CD4-positive, alpha-beta T cell (primary cell): ENCODE measurements at regions of chr11 and their contacts with region 1.

Region 1: DNA sequence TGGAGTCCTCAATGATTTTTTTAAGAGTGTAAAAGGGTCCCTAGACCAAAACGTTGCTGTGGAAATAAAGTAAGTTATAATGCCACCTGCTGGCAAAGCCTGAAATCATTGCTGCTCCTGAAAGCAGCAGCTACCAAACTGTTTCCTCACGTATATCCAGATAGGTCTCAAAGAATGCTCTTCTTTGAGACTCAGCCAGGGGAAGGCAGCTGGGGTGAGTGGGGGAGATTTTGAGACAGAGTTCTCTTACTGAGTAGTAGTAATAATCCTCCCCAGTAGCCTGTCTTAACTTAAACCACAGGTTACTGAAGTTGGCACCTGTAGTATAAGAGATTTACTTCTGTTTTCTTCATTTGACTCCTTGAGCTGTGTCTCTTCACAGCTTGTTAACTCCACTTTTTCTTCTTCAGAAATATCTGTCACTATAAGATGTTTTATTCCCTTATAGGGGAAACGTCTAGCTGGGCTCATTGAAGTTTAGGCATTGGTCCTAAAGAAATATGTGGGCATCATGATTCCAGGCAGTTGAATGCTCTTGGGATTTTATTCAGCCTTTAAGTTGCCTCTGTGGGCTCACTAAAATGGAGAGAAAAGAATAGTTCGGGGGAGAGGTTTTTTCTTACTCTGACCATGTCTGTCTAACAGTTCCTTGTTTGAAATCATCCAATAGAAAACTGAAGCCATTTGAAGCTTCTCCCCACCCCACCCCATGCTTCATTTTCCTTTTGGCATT is 77.9 kb downstream of the BTBD10 start:
- DNase-seq: peak in 6 of 14 experiments; percentile 7 to 47 (median 27)
- ATAC-seq: no peak
- H3K4me3 ChIP-seq: no peak overlapping the region
- H3K4me3 Mint-ChIP-seq: no peak overlapping the region
- H3K27ac ChIP-seq: no peak overlapping the region
- H3K27ac Mint-ChIP-seq: peak overlapping the region; percentile 19
- H3K4me1 ChIP-seq: no peaks in the 10 kb centered on the region
- H3K4me1 Mint-ChIP-seq: no peaks in the 10 kb centered on the region
- H3K27me3 ChIP-seq: no peaks in the 10 kb centered on the region
- H3K27me3 Mint-ChIP-seq: no peaks in the 10 kb centered on the region
- CTCF ChIP-seq: peak; percentile 74

Region 2: GRCh38 chr11:12963792-12964536 is 421.1 kb before region 1 on chr11:
- CTCF ChIA-PET with region 1: no interaction called
- POLR2A ChIA-PET with region 1: no interaction called
- intact Hi-C with region 1: loop called in 1 of 2 experiments (anchors 1 kb)
- DNase-seq: peak; percentile 20 to 70 (median 46)
- ATAC-seq: peak; percentile 65
- H3K4me3 ChIP-seq: no peak overlapping the region
- H3K4me3 Mint-ChIP-seq: no peak overlapping the region
- H3K27ac ChIP-seq: no peak overlapping the region
- H3K27ac Mint-ChIP-seq: no peak overlapping the region
- H3K4me1 ChIP-seq: no peaks in the 10 kb centered on the region
- H3K4me1 Mint-ChIP-seq: no peaks in the 10 kb centered on the region
- H3K27me3 ChIP-seq: peaks cover 5 to 11% of the 10 kb centered on the region in 2 experiments
- H3K27me3 Mint-ChIP-seq: peaks cover 47% of the 10 kb centered on the region
- CTCF ChIP-seq: peak; percentile 67

Region 3: GRCh38 chr11:13415203-13415602 is 30.1 kb after region 1 on chr11:
- CTCF ChIA-PET with region 1: no interaction called
- POLR2A ChIA-PET with region 1: no interaction called
- intact Hi-C with region 1: no loop called
- DNase-seq: no peak
- ATAC-seq: no peak
- H3K4me3 ChIP-seq: no peak overlapping the region
- H3K4me3 Mint-ChIP-seq: no peak overlapping the region
- H3K27ac ChIP-seq: no peak overlapping the region
- H3K27ac Mint-ChIP-seq: no peak overlapping the region
- H3K4me1 ChIP-seq: no peaks in the 10 kb centered on the region
- H3K4me1 Mint-ChIP-seq: no peaks in the 10 kb centered on the region
- H3K27me3 ChIP-seq: no peaks in the 10 kb centered on the region
- H3K27me3 Mint-ChIP-seq: no peaks in the 10 kb centered on the region
- CTCF ChIP-seq: no peak

Region 4: GRCh38 chr11:13535819-13536218 is 150.7 kb after region 1 on chr11:
- CTCF ChIA-PET with region 1: no interaction called
- POLR2A ChIA-PET with region 1: no interaction called
- intact Hi-C with region 1: no loop called
- DNase-seq: no peak
- ATAC-seq: no peak
- H3K4me3 ChIP-seq: no peak overlapping the region
- H3K4me3 Mint-ChIP-seq: no peak overlapping the region
- H3K27ac ChIP-seq: no peak overlapping the region
- H3K27ac Mint-ChIP-seq: no peak overlapping the region
- H3K4me1 ChIP-seq: no peaks in the 10 kb centered on the region
- H3K4me1 Mint-ChIP-seq: no peaks in the 10 kb centered on the region
- H3K27me3 ChIP-seq: no peaks in the 10 kb centered on the region
- H3K27me3 Mint-ChIP-seq: peaks cover 9% of the 10 kb centered on the region
- CTCF ChIP-seq: no peak